ENCODE measurements at regions of chr9 and their contacts with region 1.

Region 1: DNA sequence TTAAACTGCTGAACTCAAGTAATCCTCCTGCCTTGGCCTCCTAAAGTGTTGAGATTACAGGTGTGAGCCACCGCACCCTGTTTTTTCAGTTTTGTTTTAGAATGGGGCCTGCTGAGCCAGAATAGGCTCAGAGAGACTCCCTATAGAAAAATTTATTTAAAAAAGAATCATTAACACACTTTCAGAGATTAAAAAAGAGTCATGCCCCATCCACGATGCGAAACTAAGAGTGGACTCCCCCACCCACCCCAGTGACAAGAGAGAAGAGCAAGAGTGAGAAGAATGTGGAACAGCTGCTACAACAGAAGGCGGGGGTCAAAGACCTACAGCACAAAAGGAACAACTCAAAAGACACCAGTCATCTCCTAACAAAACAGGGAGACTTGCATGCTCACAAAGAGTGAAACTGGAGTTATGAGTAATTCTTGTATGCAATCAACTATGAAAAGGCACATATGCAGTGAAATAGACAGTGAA is 47.2 kb downstream of the GLDC start:
- DNase-seq: peak; percentile 92
- ATAC-seq: peak; percentile 99
- H3K4me3 ChIP-seq: no peak overlapping the region
- H3K27ac ChIP-seq: peak overlapping the region; percentile 63
- H3K4me1 ChIP-seq: peaks cover 10% of the 10 kb centered on the region; the same call in 1 of the 2 replicates
- H3K27me3 ChIP-seq: no peaks in the 10 kb centered on the region
- CTCF ChIP-seq: no peak
- EP300 ChIP-seq: peak; percentile 69 to 92; a peak in 3 of 4 replicates
- POLR2A ChIP-seq: no peak
- RAD21 ChIP-seq: peak; percentile 14; the same call in 1 of the 2 replicates

Region 2: GRCh38 chr9:6197330-6197729 is 401.0 kb before region 1 on chr9:
- CTCF ChIA-PET with region 1: no interaction called
- POLR2A ChIA-PET with region 1: no interaction called
- RAD21 ChIA-PET with region 1: no interaction called
- SMC1A ChIA-PET with region 1: no interaction called
- in situ Hi-C with region 1: no loop called
- intact Hi-C with region 1: no loop called
- DNase-seq: no peak
- ATAC-seq: peak; percentile 47
- H3K4me3 ChIP-seq: no peak overlapping the region
- H3K27ac ChIP-seq: no peak overlapping the region
- H3K4me1 ChIP-seq: peaks cover 4% of the 10 kb centered on the region; the same call in 1 of the 2 replicates
- H3K27me3 ChIP-seq: no peaks in the 10 kb centered on the region; a peak in 1 of 4 replicates
- CTCF ChIP-seq: peak; percentile 18 to 28 (median 23); a peak in 3 of 6 replicates
- EP300 ChIP-seq: no peak
- POLR2A ChIP-seq: no peak
- RAD21 ChIP-seq: peak; percentile 57

Region 3: GRCh38 chr9:6433405-6433804 is 164.9 kb before region 1 on chr9:
- CTCF ChIA-PET with region 1: no interaction called
- POLR2A ChIA-PET with region 1: no interaction called
- RAD21 ChIA-PET with region 1: no interaction called
- SMC1A ChIA-PET with region 1: no interaction called
- in situ Hi-C with region 1: no loop called
- intact Hi-C with region 1: no loop called
- DNase-seq: no peak
- ATAC-seq: peak; percentile 42
- H3K4me3 ChIP-seq: no peak overlapping the region
- H3K27ac ChIP-seq: peak overlapping the region; percentile 48; the same call in 1 of the 2 replicates
- H3K4me1 ChIP-seq: peaks cover 49% of the 10 kb centered on the region
- H3K27me3 ChIP-seq: no peaks in the 10 kb centered on the region
- CTCF ChIP-seq: no peak
- EP300 ChIP-seq: peak in 1 of 2 experiments; percentile 15; a peak in 1 of 4 replicates
- POLR2A ChIP-seq: no peak
- RAD21 ChIP-seq: no peak

Region 4: DNA sequence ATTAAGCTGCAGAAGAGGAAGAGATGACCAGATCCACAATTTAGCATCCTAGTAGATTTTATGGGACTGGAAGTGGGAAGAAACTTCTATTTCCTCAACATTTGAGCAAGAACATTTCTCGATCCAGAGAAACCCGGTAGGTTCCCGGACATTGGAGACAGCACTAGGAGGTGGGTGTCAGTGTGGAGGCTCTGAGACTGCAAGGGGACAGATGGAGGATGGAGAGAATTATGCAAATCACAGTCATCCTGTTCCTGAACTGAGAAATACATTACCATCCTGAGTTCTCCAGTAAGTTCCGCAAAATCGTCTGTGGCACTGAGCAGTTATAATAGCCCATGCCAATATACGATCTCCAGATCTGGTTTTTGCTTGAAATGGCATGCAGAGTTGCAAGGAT is 21.6 kb after region 1 on chr9:
- CTCF ChIA-PET with region 1: no interaction called
- POLR2A ChIA-PET with region 1: interaction called, 6 read pairs
- RAD21 ChIA-PET with region 1: no interaction called
- SMC1A ChIA-PET with region 1: interaction called, 11 read pairs
- in situ Hi-C with region 1: no loop called
- intact Hi-C with region 1: no loop called
- DNase-seq: no peak
- ATAC-seq: no peak
- H3K4me3 ChIP-seq: no peak overlapping the region
- H3K27ac ChIP-seq: no peak overlapping the region
- H3K4me1 ChIP-seq: peaks cover 31% of the 10 kb centered on the region
- H3K27me3 ChIP-seq: no peaks in the 10 kb centered on the region
- CTCF ChIP-seq: no peak
- EP300 ChIP-seq: no peak
- POLR2A ChIP-seq: no peak
- RAD21 ChIP-seq: no peak

Region 5: DNA sequence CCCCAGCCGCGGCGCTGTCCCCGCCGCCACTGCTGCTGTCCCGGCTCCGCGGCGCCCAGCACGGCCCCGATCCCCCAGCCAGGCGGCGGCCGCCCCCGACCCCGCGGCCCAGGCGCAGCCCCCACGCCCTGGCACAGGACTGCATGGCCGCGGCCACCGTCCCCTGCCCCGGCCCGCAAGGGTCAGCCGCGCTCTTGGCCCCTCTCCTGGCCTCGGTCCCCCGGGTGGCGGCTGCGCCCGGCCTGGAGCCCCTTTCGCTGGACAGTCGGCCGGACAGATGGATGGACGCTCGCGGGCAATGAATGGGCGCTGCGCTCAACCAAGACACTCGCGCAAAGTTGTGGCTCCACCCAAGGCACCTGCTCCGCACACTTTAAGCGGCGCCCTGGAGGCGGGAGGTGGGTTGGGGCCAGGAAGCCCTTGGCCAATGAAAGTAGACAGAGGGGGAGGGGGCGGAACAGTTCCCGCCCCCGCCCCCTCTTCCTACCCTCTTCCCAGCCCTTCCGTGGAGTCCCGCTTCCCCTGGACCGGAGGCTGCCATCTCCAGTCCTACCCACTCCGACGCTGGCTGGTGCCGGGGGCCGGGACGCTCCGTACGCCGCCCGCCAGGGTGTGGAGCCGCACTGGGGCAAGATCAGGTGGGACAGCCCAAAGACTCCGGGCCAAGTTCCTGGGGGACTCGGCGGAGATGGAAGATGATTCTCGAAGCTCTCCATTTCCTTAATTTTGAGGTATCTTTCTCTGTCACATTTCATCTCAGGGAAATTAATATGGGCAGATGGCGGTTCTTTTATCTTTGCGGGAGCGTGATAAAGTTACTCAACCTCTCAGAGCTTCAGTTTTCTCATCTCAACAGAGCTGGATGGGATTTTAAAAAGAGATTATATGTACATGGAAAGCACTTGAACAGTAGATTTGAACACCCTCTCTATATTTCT is 47.3 kb after region 1 on chr9 and contains the start of gene GLDC:
- CTCF ChIA-PET with region 1: interaction called, 3 read pairs
- POLR2A ChIA-PET with region 1: interaction called, 3 read pairs
- RAD21 ChIA-PET with region 1: interaction called, 6 read pairs
- SMC1A ChIA-PET with region 1: interaction called, 31 read pairs
- in situ Hi-C with region 1: no loop called
- intact Hi-C with region 1: loop called (anchors 2 kb)
- DNase-seq: no peak
- ATAC-seq: peak; percentile 91
- H3K4me3 ChIP-seq: peak within 1 kb of the TSS; percentile 94
- H3K27ac ChIP-seq: peak within 1 kb of the TSS; percentile 75
- H3K4me1 ChIP-seq: no peaks in the 10 kb centered on the region; the same call in 1 of the 2 replicates
- H3K27me3 ChIP-seq: no peaks in the 10 kb centered on the region
- CTCF ChIP-seq: no peak
- EP300 ChIP-seq: no peak
- POLR2A ChIP-seq: peak; percentile 80
- RAD21 ChIP-seq: no peak
- polyA plus RNA-seq, gene GLDC: 88.2 to 112 TPM

Region 6: DNA sequence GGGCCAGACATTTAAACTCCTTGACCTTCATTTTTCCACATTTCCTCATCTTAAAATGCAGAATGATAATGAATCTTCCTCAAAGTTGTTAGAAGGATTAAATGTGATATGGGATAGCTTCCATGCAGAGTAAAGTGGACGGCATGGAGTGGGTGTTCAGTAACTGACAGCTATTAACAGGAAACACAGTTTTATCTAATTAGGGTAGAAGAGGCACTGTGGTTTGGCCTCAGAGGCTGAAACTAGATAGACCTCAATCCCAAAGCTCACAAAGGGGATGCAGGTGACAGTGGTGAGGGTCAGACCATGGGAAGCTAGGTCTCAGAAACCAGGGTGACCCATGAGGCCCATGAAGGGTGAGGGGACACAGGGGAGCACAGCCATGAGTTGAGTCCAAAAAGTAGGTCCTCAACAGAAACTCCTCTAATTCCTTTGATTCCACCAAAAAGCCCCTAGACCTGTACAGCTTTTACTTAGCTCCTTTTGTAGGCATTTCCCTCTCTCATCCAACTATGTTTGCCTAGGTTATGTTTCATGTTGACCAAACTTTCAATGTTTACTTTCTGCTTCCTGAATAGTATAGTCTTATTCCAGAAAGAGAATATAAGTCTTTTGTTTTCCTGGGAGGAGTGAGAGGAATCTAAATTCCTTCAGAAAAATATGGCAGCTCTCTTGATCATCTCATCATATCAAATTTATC is 75.2 kb after region 1 on chr9:
- CTCF ChIA-PET with region 1: interaction called, 6 read pairs
- POLR2A ChIA-PET with region 1: interaction called, 10 read pairs
- RAD21 ChIA-PET with region 1: interaction called, 5 read pairs
- SMC1A ChIA-PET with region 1: interaction called, 16 read pairs
- in situ Hi-C with region 1: no loop called
- intact Hi-C with region 1: no loop called
- DNase-seq: no peak
- ATAC-seq: peak; percentile 77
- H3K4me3 ChIP-seq: no peak overlapping the region
- H3K27ac ChIP-seq: no peak overlapping the region
- H3K4me1 ChIP-seq: peaks cover 9% of the 10 kb centered on the region
- H3K27me3 ChIP-seq: no peaks in the 10 kb centered on the region
- CTCF ChIP-seq: no peak
- EP300 ChIP-seq: peak; percentile 66 to 77; a peak in 2 of 4 replicates
- POLR2A ChIP-seq: no peak
- RAD21 ChIP-seq: no peak

Region 7: DNA sequence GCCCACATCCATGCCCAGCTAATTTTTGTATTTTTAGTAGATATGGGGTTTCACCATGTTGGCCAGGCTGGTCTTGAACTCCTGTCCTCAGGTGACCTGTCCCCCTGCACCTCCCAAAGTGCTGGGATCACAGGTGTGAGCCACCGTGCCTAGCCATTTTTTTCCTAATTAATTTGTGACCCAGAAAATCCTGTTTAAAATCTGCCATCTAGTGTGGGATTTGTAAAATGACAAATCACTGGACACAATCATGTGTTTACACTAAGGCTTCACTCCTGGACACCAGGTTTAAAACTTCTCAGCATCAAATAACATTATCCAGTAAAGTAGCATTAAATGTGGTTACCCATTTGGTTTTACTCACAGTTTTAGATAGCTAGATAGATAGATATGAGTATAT is 140.9 kb after region 1 on chr9:
- CTCF ChIA-PET with region 1: interaction called, 4 read pairs
- POLR2A ChIA-PET with region 1: no interaction called
- RAD21 ChIA-PET with region 1: no interaction called
- SMC1A ChIA-PET with region 1: interaction called, 12 read pairs
- in situ Hi-C with region 1: no loop called
- intact Hi-C with region 1: no loop called
- DNase-seq: no peak
- ATAC-seq: peak; percentile 59
- H3K4me3 ChIP-seq: no peak overlapping the region
- H3K27ac ChIP-seq: no peak overlapping the region
- H3K4me1 ChIP-seq: no peaks in the 10 kb centered on the region
- H3K27me3 ChIP-seq: no peaks in the 10 kb centered on the region
- CTCF ChIP-seq: peak; percentile 8 to 46 (median 36); a peak in 4 of 6 replicates
- EP300 ChIP-seq: no peak
- POLR2A ChIP-seq: no peak
- RAD21 ChIP-seq: peak; percentile 57

Region 8: GRCh38 chr9:8558176-8558575 is 1959.9 kb after region 1 on chr9:
- CTCF ChIA-PET with region 1: no interaction called
- POLR2A ChIA-PET with region 1: no interaction called
- RAD21 ChIA-PET with region 1: no interaction called
- SMC1A ChIA-PET with region 1: no interaction called
- in situ Hi-C with region 1: no loop called
- intact Hi-C with region 1: no loop called
- DNase-seq: no peak
- ATAC-seq: no peak
- H3K4me3 ChIP-seq: no peak overlapping the region
- H3K27ac ChIP-seq: no peak overlapping the region
- H3K4me1 ChIP-seq: no peaks in the 10 kb centered on the region
- H3K27me3 ChIP-seq: no peaks in the 10 kb centered on the region
- CTCF ChIP-seq: no peak
- EP300 ChIP-seq: no peak
- POLR2A ChIP-seq: no peak
- RAD21 ChIP-seq: no peak